ENCODE measurements at regions of chr7 and their contacts with region 1.

Region 1: GRCh38 chr7:2354186-2354938 is at the start of gene EIF3B:
- DNase-seq: peak; percentile 97
- ATAC-seq: peak; percentile 96
- total RNA-seq, gene EIF3B: 68.1 TPM

Region 2: DNA sequence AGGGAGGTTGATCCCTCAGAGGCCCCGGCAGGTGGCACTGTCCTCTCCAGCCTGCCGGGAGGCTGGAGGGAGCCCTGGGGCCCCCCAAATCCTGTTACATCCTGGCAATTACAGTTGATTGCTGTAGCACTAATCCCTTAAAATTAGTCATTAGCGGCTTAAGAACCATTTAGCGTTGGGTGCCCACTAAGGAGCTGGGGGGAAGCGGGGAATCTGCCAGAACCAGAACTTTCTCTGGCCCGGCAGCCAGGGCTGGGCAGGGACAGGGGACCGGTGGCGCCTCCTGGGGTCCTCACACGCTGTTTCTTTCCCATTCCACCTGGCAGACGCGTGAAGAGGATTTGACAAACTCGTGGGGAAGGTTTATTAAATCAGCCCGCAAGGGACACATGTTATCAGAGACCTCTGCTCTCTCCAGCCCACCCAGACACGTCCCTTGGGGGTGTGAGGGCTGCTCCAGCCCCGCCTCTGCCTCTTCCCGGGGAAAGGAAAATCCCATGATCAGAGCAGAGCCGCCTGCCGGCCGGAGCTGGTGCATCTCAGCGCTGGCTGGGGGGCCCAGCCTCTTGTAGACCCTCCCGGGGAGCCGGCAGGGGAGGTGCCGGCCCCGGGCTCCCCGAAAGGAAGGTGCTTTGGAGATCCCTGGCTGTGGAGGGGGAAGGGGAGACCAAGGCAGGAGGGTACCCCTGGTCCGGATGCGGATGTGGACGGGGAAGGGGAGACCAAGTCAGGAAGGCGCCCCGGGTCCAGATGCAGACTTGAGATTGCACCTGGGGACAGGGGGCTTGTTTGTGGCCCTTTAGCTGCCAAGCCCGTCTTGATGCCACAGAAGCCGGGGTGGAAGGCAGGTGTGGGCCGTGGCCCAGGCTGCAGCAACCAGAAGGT is 541.6 kb before region 1 on chr7:
- intact Hi-C with region 1: loop called (anchors 10 kb)
- DNase-seq: no peak
- ATAC-seq: peak; percentile 42

Region 3: DNA sequence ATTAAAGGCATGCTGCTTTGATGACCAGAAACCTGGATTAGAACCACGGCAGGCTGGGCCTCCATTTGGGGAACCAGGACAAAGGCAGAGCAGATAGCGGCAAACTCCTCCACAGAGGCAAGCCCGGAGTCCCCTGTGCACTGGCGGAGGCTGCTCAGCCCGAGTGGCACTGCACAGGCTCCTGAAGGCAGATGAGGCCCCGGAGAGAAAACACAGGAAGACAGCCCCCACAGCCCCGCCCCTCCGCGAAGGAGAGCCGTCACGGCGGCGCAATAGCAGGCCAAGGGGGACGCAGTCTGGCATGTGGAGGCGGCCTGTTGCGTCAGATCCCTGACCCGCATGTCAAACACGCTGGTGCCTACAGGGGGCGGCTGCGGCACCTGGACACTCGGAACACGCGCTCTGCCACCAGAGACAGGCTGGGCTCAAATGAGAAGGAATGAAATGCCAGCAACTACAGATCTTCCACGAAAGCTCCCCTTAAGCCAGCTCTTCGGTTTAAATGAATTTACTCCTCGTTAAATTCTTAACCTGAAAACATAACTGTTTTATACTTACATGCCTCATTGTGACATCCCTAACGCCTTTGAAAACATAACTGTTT is 250.2 kb before region 1 on chr7:
- intact Hi-C with region 1: loop called (anchors 10 kb)
- DNase-seq: peak; percentile 93
- ATAC-seq: peak; percentile 90

Region 4: DNA sequence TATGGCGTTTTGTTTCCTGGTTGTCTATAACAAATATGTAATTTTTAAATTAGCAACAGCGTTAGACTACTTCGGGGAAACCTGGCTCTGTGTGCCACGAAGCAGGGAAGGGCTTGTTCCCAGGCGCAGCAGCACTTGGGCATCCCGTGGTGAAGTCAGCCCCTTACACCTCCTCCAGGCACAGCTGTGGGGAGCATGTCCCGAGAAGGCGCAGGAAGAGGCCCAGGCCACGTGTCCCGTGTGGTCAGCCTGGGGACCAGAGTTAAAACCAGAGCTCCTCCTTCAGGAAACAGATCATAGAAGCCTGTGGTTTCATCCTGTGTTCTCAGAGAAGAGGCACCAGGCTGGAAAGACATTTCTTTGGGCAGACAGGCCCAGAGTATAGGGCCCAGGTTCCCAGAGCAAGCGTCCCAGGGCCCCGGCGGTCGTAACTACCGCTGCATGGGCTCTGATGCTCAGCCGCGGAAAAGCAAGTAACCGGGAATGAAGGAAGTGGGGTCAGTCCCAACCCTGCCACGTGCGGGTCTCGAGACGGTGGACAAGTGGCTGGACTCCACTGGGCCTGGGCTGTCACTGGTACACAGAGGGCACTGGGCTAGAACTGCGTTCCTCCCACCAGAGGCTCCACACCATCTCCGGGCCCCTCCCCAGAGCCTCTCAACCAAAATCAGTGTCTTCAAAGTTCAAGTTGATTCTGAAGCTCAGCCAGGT is 105.2 kb before region 1 on chr7:
- intact Hi-C with region 1: loop called (anchors 5 kb)
- DNase-seq: peak; percentile 85
- ATAC-seq: peak; percentile 86

Region 5: GRCh38 chr7:2632733-2633537 is 278.6 kb after region 1 on chr7:
- intact Hi-C with region 1: no loop called
- DNase-seq: peak; percentile 81
- ATAC-seq: no peak

Measured in Right ventricle myocardium inferior (tissue), 1 donor.